Heart right ventricle (tissue), 16 donors: ENCODE measurements at regions of chr9 and their contacts with region 1.

Region 1: GRCh38 chr9:127199001-127199791 is 65.4 kb upstream of the GARNL3 start:
- DNase-seq: peak; percentile 80 to 84
- ATAC-seq: peak; percentile 37 to 83 (median 64)
- H3K4me3 ChIP-seq: no peak overlapping the region
- H3K27ac ChIP-seq: peak overlapping the region in 9 of 10 donors; percentile 50 to 81 (median 69)
- H3K4me1 ChIP-seq: peaks cover 21 to 36% (median 27%) of the 10 kb centered on the region in 9 donors
- H3K27me3 ChIP-seq: no peaks in the 10 kb centered on the region
- CTCF ChIP-seq: peak; percentile 87 to 94 (median 91)

Region 2: DNA sequence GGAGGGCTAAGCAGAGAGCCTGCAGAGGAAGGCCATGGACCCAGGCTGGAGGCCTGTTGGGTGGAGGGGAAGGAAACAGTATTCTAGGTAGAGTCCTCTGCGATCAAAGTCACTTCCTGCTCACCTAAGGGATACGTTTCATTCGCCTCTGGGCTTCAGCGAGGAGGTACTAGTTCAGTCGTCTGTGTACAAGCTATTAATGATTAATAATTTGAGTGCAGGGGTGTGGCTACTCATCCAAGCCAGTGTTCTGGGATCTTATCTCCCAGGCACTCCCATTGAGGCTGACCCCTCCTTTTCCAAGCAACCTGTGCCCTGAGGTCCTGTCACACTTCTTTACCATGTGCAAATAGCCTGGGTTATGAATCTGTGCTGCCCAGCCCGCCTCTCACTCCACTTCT is 259.4 kb before region 1 on chr9:
- intact Hi-C with region 1: loop called (anchors 1 to 5 kb)
- DNase-seq: no peak
- ATAC-seq: peak in 1 of 8 donors; percentile 15
- H3K4me3 ChIP-seq: no peak overlapping the region
- H3K27ac ChIP-seq: no peak overlapping the region
- H3K4me1 ChIP-seq: peaks cover 0 to 57% (median 27%) of the 10 kb centered on the region in 9 donors
- H3K27me3 ChIP-seq: no peaks in the 10 kb centered on the region
- CTCF ChIP-seq: no peak

Region 3: DNA sequence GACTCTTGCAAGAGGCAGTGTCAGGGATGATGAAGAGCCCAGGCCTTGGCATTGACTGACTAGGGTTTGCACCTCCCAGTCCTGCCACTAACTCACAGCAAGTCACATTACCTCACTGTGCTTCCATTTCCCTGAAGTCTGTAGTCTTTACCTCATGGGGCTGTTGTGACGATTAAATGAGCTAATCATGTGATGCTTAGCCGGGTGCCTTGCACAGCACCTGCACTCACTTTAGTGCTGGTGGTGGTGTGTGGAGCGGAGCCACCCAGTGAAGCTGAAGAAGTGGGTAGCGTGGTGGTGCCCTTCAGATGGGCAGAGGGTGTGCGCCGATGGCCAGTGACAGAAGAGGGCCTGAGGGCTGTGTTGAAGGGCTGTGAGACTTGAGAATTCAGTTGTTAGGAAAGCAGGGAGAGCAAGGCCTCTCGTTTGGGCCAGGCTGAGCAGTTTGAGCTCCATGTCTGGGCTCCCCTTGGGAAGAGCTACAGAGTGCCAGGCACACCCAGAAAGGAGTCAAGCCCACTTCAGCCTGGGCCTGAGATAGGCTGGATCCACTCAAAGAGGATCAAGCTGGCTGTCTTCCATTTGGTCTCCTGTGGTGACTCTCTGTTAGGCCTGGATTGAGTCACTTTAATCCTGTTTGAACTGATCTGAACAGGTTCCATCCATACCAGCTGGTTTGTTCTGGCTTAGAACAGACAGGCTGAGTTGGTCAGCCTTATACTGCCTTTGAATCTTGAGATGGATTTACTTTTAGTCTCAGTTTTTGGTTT is 242.1 kb before region 1 on chr9:
- intact Hi-C with region 1: loop called in 2 of 10 experiments (anchors 5 kb)
- DNase-seq: peak in 1 of 2 donors; percentile 38
- ATAC-seq: peak; percentile 56 to 74 (median 66)
- H3K4me3 ChIP-seq: no peak overlapping the region
- H3K27ac ChIP-seq: peak overlapping the region; percentile 24 to 90 (median 84)
- H3K4me1 ChIP-seq: peaks cover 3 to 57% (median 18%) of the 10 kb centered on the region in 9 donors
- H3K27me3 ChIP-seq: no peaks in the 10 kb centered on the region
- CTCF ChIP-seq: no peak

Region 4: GRCh38 chr9:126965541-126966428 is 233.4 kb before region 1 on chr9:
- intact Hi-C with region 1: loop called in 6 of 10 experiments (anchors 1 to 5 kb)
- DNase-seq: peak; percentile 52 to 55
- ATAC-seq: peak; percentile 65 to 88 (median 84)
- H3K4me3 ChIP-seq: no peak overlapping the region
- H3K27ac ChIP-seq: peak overlapping the region; percentile 3 to 81 (median 62)
- H3K4me1 ChIP-seq: peaks cover 0 to 34% (median 10%) of the 10 kb centered on the region in 9 donors
- H3K27me3 ChIP-seq: no peaks in the 10 kb centered on the region
- CTCF ChIP-seq: peak; percentile 59 to 89 (median 80)

Region 5: GRCh38 chr9:127053057-127053821 is 146.0 kb before region 1 on chr9:
- intact Hi-C with region 1: loop called in 1 of 10 experiments (anchors 10 kb)
- DNase-seq: peak; percentile 17 to 55
- ATAC-seq: peak in 5 of 8 donors; percentile 5 to 47 (median 42)
- H3K4me3 ChIP-seq: no peak overlapping the region
- H3K27ac ChIP-seq: peak overlapping the region in 9 of 10 donors; percentile 36 to 81 (median 68)
- H3K4me1 ChIP-seq: peaks cover 22 to 100% (median 60%) of the 10 kb centered on the region in 9 donors
- H3K27me3 ChIP-seq: no peaks in the 10 kb centered on the region
- CTCF ChIP-seq: no peak

Region 6: GRCh38 chr9:127130661-127131538 is 68.3 kb before region 1 on chr9:
- intact Hi-C with region 1: loop called in 1 of 10 experiments (anchors 5 kb)
- DNase-seq: peak in 1 of 2 donors; percentile 70
- ATAC-seq: peak in 7 of 8 donors; percentile 8 to 53 (median 24)
- H3K4me3 ChIP-seq: no peak overlapping the region
- H3K27ac ChIP-seq: peak overlapping the region in 9 of 10 donors; percentile 5 to 95 (median 71)
- H3K4me1 ChIP-seq: peaks cover 31 to 84% (median 66%) of the 10 kb centered on the region in 9 donors
- H3K27me3 ChIP-seq: no peaks in the 10 kb centered on the region
- CTCF ChIP-seq: no peak

Region 7: GRCh38 chr9:127423934-127424675 is 224.9 kb after region 1 on chr9 and contains the start of gene ZNF79:
- intact Hi-C with region 1: no loop called
- DNase-seq: peak; percentile 93 to 95
- ATAC-seq: peak; percentile 96 to 100 (median 99)
- H3K4me3 ChIP-seq: peak within 1 kb of the TSS; percentile 67 to 100 (median 84)
- H3K27ac ChIP-seq: peak within 1 kb of the TSS; percentile 81 to 95 (median 88)
- H3K4me1 ChIP-seq: peaks cover 13 to 49% (median 36%) of the 10 kb centered on the region in 9 donors
- H3K27me3 ChIP-seq: no peaks in the 10 kb centered on the region
- CTCF ChIP-seq: peak in 1 of 9 donors; percentile 8
- total RNA-seq, gene ZNF79: 4.4 to 8.3 (median 6.4) TPM